ENCODE measurements at regions of chr7 and their contacts with region 1.

Region 1: GRCh38 chr7:992709-993607 is 10.0 kb downstream of the CYP2W1 start:
- DNase-seq: peak; percentile 86
- H3K4me3 Mint-ChIP-seq: no peak overlapping the region
- H3K27ac Mint-ChIP-seq: peak overlapping the region; percentile 40
- H3K4me1 Mint-ChIP-seq: peaks cover 5% of the 10 kb centered on the region
- H3K27me3 Mint-ChIP-seq: no peaks in the 10 kb centered on the region

Region 2: DNA sequence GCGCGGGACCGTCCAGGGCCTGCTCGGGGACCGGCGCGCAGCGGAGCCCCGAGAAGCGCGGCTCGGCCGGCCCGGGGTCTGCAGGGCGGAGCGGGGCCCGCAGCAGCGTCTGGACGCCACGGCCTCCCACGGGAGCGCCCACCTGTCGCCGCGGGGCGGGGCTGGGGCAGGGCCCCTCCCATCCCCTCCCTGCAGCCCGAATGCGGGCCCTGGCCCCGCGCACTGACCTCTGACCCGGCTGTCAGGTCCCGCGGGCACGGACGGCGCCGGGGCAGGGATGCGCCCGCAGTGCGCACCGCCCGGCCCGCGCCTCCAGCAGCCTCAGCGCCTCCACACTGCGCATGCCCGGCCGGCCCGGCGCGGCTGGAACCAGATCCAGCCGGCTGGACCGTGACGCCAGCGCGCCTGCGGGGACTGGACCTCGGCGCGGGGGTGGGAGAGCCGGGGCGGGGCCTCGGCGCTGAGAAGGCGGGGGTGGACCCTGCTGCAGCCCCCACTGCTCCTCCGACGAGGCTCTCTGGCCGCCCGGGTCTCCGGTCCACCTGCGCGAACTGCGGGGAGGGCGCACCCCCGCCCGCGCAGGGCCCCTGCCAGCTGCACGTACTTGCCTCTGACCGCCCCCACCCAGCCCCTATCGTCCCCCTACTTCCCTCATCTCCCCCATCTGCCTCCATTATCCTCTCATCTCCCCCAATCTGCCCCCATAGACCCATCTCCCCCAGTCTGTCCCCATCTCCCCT is 35.2 kb after region 1 on chr7:
- intact Hi-C with region 1: loop called (anchors 1 kb)
- DNase-seq: peak; percentile 82
- H3K4me3 Mint-ChIP-seq: peak overlapping the region; percentile 82
- H3K27ac Mint-ChIP-seq: peak overlapping the region; percentile 91
- H3K4me1 Mint-ChIP-seq: peaks cover 17% of the 10 kb centered on the region
- H3K27me3 Mint-ChIP-seq: no peaks in the 10 kb centered on the region

Region 3: GRCh38 chr7:1065263-1066260 is 72.6 kb after region 1 on chr7:
- intact Hi-C with region 1: loop called (anchors 1 kb)
- DNase-seq: peak; percentile 74
- H3K4me3 Mint-ChIP-seq: no peak overlapping the region
- H3K27ac Mint-ChIP-seq: no peak overlapping the region
- H3K4me1 Mint-ChIP-seq: peaks cover 4% of the 10 kb centered on the region
- H3K27me3 Mint-ChIP-seq: no peaks in the 10 kb centered on the region

Region 4: DNA sequence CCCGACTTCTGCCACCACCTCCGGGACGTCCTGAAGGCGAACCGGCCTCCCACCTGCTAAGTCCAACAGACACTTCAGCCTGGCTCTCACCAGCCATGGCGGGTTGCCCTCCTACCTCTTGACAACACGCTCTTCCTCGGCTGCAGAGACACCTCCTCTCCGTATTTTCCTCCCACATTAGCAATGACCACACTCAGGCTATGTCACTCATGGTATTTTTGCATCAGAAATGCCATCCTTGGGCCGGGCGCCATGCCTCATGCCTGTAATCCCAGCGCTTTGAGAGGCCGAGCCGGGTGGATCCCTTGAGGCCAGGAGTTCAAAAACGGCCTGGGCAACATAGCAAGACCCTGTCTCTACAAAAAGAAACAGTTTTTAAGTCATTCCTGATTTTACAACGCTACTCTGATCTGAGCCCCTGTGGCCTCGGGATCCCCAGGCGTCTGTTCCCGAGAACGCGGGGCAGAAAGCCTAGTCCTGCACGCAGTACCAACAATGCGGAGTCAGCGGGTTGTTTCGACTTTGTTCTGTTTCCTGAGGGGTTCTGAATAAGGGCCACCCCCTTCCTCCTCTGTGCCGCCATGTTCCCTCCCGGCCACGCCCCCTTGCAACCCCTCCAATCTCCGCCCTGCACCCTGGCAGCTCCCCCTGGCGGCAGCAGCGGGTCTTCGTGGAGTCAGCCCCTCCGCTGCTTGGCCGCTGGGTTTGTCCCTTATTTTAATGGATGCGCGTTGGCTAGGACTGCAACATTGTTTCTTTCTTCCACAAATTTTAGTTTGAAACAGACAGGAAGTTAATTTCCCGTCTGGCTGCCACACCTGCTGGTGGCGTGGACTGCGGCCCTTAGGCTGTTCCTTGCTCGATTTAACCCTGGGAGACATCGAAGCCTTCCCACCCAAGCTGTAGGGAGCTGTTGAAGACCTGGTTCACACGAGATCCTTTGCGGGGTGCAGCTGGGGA is 176.7 kb after region 1 on chr7:
- intact Hi-C with region 1: loop called (anchors 1 kb)
- DNase-seq: peak; percentile 85
- H3K4me3 Mint-ChIP-seq: peak overlapping the region; percentile 82
- H3K27ac Mint-ChIP-seq: peak overlapping the region; percentile 79
- H3K4me1 Mint-ChIP-seq: peaks cover 16% of the 10 kb centered on the region
- H3K27me3 Mint-ChIP-seq: no peaks in the 10 kb centered on the region

Region 5: GRCh38 chr7:1175967-1176851 is 183.3 kb after region 1 on chr7:
- intact Hi-C with region 1: loop called (anchors 1 kb)
- DNase-seq: peak; percentile 74
- H3K4me3 Mint-ChIP-seq: peak overlapping the region; percentile 19
- H3K27ac Mint-ChIP-seq: peak overlapping the region; percentile 9
- H3K4me1 Mint-ChIP-seq: peaks cover 12% of the 10 kb centered on the region
- H3K27me3 Mint-ChIP-seq: peaks cover 11% of the 10 kb centered on the region